Activated T-helper 2 cell treated with anti-CD3 and anti-CD28 coated beads, Interferon-gamma antibody, Interleukin-2, Interleukin-4, amounts not matched to agents 10 μg/mL and 5 μg/mL and 100 μg/mL, durations not matched to agents 14 hours and 24 hours and 36 hours (primary cell): ENCODE measurements at regions of chr3 and their contacts with region 1.

Region 1: DNA sequence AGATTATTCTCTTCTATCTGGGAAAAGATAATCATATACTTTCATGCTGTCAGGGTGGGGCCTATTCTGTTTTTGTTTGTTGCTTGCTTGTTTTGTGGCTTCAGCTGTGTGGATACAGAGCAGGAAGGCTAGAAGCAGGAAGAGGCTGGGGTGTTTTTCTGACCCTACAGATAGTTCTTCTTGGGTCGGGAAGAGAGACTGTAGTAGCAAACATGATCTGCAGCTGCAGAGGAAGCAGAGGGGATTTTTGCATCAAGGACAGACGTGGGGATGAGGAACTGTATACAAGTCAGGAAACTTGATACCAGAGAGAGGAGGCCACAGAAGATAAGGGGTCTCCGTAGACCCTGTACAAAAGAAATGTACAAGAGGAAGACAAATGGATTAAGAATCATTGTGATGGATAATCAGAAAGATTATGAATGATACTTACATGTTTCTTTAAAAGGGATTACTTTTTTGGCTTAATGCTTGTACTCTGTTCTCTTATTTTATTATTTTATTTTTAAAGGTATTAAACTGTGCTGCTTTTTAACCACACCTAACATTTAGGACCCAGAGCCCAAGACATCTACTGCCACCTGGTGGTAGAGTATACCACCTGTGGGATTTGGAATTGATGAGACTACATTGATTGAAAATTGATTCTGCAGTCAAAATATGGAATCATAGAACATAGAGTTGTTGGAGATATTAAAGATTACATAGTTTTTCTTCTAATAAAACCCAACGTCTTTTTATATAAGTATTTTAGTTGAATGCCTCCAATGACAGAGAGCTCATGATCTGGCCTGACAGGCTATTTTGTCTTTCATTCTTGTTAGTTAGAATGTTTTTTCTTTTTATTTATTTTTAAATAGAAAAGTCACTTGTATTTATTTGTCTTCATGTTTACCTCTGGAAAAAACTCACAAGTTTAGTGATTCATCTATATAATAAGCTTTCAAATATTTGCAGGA is 87.3 kb upstream of the ROPN1 start:
- DNase-seq: no peak
- H3K4me3 Mint-ChIP-seq: no peak overlapping the region
- H3K27ac Mint-ChIP-seq: no peak overlapping the region
- H3K4me1 Mint-ChIP-seq: no peaks in the 10 kb centered on the region
- H3K27me3 Mint-ChIP-seq: peaks cover 5% of the 10 kb centered on the region

Region 2: DNA sequence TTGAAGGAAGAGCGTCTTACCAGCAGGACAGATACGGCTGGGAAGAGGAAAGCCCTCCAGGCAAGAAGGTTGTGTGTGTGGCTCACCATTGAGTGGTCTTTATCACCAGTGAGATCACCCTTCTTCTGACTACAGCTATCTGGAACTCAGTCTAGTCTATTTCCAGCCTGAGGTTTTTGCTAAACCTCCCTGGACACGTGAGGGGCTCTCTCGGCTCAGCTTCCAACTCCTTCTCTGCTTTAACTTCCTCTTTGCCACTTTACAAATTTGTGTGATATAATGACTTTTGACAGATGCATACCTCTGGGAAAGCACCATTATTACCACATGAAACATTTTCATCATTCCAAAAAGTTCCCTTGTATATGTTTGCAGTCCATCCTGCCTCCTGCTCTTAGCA is 72.0 kb before region 1 on chr3:
- intact Hi-C with region 1: no loop called
- DNase-seq: no peak
- H3K4me3 Mint-ChIP-seq: no peak overlapping the region
- H3K27ac Mint-ChIP-seq: no peak overlapping the region
- H3K4me1 Mint-ChIP-seq: no peaks in the 10 kb centered on the region
- H3K27me3 Mint-ChIP-seq: peaks cover 32% of the 10 kb centered on the region

Region 3: DNA sequence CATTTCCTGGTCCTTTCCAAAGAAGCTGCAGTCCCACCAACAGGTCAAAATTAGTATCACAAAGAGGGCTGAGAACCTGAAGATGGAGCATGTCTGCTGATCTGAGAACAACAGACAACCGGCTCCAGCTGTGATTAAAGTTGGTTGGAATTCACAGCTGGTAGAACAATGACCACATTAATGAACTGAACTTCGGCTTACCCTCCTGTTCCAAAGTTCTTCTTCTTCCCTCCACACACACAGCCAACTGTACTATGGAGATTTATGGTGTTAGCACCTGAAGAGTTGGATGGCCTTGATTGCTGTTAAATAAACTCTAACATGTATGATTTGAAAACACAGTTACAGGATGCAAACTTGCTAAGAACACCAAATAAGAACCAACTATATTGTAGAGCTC is 59.9 kb before region 1 on chr3:
- intact Hi-C with region 1: loop called (anchors 5 kb)
- DNase-seq: no peak
- H3K4me3 Mint-ChIP-seq: no peak overlapping the region
- H3K27ac Mint-ChIP-seq: no peak overlapping the region
- H3K4me1 Mint-ChIP-seq: no peaks in the 10 kb centered on the region
- H3K27me3 Mint-ChIP-seq: peaks cover 27% of the 10 kb centered on the region